Activated B cell treated with CpG ODN at 0.5 μM for 24 hours (primary cell): ENCODE measurements at regions of chr5 and their contacts with region 1.

Region 1: GRCh38 chr5:1641560-1642166 is 117.9 kb upstream of the LPCAT1 start:
- DNase-seq: peak; percentile 55
- ATAC-seq: peak; percentile 87
- H3K4me3 Mint-ChIP-seq: no peak overlapping the region
- H3K27ac Mint-ChIP-seq: peak overlapping the region; percentile 46
- H3K4me1 Mint-ChIP-seq: peaks cover 16% of the 10 kb centered on the region
- H3K27me3 Mint-ChIP-seq: peaks cover 20% of the 10 kb centered on the region
- CTCF ChIP-seq: peak; percentile 64

Region 2: GRCh38 chr5:1004461-1005248 is 637.0 kb before region 1 on chr5:
- CTCF ChIA-PET with region 1: no interaction called
- POLR2A ChIA-PET with region 1: no interaction called
- intact Hi-C with region 1: loop called (anchors 10 kb)
- DNase-seq: peak; percentile 31
- ATAC-seq: peak; percentile 45
- H3K4me3 Mint-ChIP-seq: peak overlapping the region; percentile 71
- H3K27ac Mint-ChIP-seq: no peak overlapping the region
- H3K4me1 Mint-ChIP-seq: peaks cover 15% of the 10 kb centered on the region
- H3K27me3 Mint-ChIP-seq: peaks cover 38% of the 10 kb centered on the region
- CTCF ChIP-seq: no peak

Region 3: DNA sequence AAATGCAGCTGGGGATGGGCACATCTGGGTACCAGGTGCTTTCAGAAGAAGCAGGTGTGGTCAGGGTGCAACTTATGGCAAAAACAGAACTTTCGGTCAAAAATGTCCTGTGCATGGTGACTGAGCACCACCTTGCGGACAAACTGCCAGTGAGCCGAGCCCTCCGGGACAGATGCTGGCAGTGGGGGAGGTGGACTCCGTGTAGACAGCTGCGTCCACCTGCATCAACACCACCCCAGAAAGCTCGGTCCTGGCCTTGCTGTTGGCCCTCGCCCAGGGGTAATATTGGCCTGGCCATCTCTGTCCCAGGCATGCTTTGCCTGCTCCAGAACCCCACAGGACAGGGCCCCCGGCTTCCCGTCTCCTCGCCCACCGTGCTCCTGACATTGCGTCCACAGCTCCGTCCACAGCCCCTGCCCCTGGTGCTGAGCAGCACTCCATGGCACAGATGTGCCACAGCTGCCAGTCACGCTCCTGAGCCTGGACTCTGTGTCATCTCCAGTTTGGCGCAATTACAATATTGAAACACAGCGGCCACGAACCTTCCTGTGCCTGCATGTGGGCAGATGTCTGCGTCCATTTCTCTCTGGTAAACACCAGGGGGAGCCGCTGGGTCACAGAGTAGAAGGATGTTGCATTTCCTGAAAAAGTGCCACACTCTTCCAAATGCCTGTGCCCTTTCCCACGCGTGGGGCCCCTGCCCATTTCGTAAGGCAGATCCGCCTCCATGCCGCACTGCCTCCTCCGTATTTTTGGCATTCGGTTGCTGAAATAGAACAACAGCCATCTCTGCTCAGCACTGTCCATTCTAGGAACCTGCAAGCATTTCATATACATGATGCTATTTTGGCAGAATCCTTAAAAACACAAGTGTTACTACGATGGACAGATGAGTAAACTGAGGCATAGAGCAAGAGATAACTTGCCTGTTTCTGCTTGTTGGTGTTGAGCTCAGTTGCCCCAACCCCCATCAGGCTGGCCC is 473.6 kb before region 1 on chr5:
- CTCF ChIA-PET with region 1: interaction called, 36 read pairs
- POLR2A ChIA-PET with region 1: interaction called, 3 read pairs
- intact Hi-C with region 1: loop called (anchors 1 kb)
- DNase-seq: peak; percentile 44
- ATAC-seq: peak; percentile 82
- H3K4me3 Mint-ChIP-seq: peak overlapping the region; percentile 80
- H3K27ac Mint-ChIP-seq: no peak overlapping the region
- H3K4me1 Mint-ChIP-seq: peaks cover 12% of the 10 kb centered on the region
- H3K27me3 Mint-ChIP-seq: peaks cover 10% of the 10 kb centered on the region
- CTCF ChIP-seq: peak; percentile 86

Region 4: DNA sequence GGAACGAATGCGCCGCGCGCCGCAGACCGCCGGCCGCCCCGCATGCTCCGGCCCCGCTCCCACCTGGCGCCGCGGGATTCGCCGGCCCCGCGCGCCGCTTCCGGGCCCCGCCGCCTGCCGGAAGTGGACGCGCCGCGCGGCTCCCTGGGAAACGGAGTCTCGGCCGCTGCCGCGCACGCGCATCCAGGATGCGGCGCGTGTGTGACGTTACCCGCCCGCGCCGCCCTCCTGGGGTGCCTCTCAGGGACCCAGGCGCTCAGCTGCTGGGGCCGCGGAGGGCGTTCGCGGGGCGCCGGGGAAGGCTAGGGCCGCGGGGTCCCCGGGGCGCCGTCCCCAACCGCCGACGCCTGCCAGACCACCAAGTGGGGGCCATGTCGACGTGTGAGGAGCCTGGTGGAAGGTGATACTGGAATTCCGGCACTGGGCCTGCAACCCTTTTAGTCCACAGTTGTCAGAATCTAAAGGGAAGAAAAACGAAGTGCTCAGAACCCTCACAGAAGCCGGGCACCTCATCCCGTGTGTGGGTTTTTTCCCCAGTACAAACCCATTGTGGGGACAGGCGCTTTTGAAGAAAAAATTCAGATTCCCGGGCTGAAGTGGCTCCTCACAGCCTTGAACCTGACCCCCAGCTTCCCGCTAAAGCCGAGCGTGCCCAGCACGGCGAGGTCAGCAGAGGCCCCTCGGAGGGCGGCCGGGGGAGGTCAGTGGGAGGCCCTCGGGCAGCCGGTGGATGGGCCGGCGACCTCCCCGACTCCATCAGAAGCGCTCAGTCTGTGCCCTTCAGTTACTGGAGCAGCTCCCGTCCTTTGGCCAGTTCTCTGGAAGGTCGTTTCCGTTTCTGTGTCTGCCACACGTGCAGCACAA is 296.5 kb before region 1 on chr5 and contains the start of gene CLPTM1L:
- CTCF ChIA-PET with region 1: no interaction called
- POLR2A ChIA-PET with region 1: no interaction called
- intact Hi-C with region 1: loop called (anchors 2 kb)
- DNase-seq: peak; percentile 92
- ATAC-seq: peak; percentile 94
- H3K4me3 Mint-ChIP-seq: peak within 1 kb of the TSS; percentile 88
- H3K27ac Mint-ChIP-seq: peak within 1 kb of the TSS; percentile 80
- H3K4me1 Mint-ChIP-seq: peaks cover 37% of the 10 kb centered on the region
- H3K27me3 Mint-ChIP-seq: no peaks in the 10 kb centered on the region
- CTCF ChIP-seq: no peak
- total RNA-seq, gene CLPTM1L: 87.5 and 100 TPM in 2 replicates

Region 5: GRCh38 chr5:1479581-1480188 is 162.0 kb before region 1 on chr5:
- CTCF ChIA-PET with region 1: interaction called, 5 read pairs
- POLR2A ChIA-PET with region 1: no interaction called
- intact Hi-C with region 1: loop called (anchors 1 kb)
- DNase-seq: peak; percentile 68
- ATAC-seq: peak; percentile 53
- H3K4me3 Mint-ChIP-seq: peak overlapping the region; percentile 73
- H3K27ac Mint-ChIP-seq: peak overlapping the region; percentile 92
- H3K4me1 Mint-ChIP-seq: peaks cover 61% of the 10 kb centered on the region
- H3K27me3 Mint-ChIP-seq: no peaks in the 10 kb centered on the region
- CTCF ChIP-seq: no peak

Region 6: GRCh38 chr5:1594357-1595106 is 47.1 kb before region 1 on chr5:
- CTCF ChIA-PET with region 1: no interaction called
- POLR2A ChIA-PET with region 1: no interaction called
- intact Hi-C with region 1: loop called (anchors 1 kb)
- DNase-seq: peak; percentile 81
- ATAC-seq: peak; percentile 94
- H3K4me3 Mint-ChIP-seq: peak overlapping the region; percentile 82
- H3K27ac Mint-ChIP-seq: peak overlapping the region; percentile 56
- H3K4me1 Mint-ChIP-seq: peaks cover 19% of the 10 kb centered on the region
- H3K27me3 Mint-ChIP-seq: no peaks in the 10 kb centered on the region
- CTCF ChIP-seq: no peak